Activated CD8-positive, alpha-beta memory T cell treated with anti-CD3 and anti-CD28 coated beads, Interleukin-2, amount 10 ng/mL, durations not matched to agents 7 days and 5 days (primary cell): ENCODE measurements at regions of chr11 and their contacts with region 1.

Region 1: GRCh38 chr11:123407130-123407995 is 22.7 kb upstream of the GRAMD1B start:
- DNase-seq: peak; percentile 79
- ATAC-seq: peak; percentile 90
- H3K4me3 Mint-ChIP-seq: peak overlapping the region; percentile 74
- H3K27ac Mint-ChIP-seq: peak overlapping the region; percentile 75
- H3K4me1 Mint-ChIP-seq: peaks cover 48% of the 10 kb centered on the region
- H3K27me3 Mint-ChIP-seq: no peaks in the 10 kb centered on the region

Region 2: DNA sequence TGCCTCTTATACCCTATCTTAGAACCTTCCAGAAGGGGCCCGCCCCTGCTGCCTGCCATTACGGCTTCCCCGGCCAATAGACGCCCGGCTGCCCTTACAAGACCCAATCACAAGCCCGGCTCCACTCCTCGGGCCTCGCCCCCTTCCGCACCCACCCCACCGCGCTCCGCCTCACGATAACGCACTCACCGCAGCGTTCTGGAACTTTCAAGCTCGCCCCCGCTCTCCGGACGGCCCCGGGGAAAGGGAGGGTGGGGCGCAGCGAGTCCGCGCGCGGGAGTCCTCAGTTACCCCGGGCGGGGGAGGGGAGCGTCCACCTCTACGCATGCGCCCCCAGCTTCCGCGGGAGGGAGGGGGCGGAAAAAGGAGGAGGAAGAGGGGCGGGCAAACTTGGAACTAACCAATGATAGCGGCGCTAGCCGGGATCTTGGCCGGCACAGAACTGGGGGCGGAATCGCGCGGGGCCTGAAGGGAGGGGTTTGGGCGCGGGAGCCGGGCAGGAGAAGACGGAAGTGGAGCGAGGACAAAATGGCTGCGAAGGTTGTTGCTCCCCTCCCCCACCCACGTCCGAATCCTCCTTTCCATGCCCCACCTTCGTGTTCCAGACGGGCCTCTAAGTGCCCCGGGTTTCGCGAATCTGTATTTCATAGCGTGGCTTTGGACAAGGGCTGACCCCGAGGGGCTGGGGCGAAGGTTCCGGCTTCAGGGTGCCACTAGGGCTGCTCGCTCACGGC is 345.0 kb before region 1 on chr11:
- CTCF ChIA-PET with region 1: no interaction called
- DNase-seq: peak; percentile 99
- ATAC-seq: peak; percentile 84
- H3K4me3 Mint-ChIP-seq: peak overlapping the region; percentile 99
- H3K27ac Mint-ChIP-seq: peak overlapping the region; percentile 100
- H3K4me1 Mint-ChIP-seq: peaks cover 46% of the 10 kb centered on the region
- H3K27me3 Mint-ChIP-seq: no peaks in the 10 kb centered on the region

Region 3: DNA sequence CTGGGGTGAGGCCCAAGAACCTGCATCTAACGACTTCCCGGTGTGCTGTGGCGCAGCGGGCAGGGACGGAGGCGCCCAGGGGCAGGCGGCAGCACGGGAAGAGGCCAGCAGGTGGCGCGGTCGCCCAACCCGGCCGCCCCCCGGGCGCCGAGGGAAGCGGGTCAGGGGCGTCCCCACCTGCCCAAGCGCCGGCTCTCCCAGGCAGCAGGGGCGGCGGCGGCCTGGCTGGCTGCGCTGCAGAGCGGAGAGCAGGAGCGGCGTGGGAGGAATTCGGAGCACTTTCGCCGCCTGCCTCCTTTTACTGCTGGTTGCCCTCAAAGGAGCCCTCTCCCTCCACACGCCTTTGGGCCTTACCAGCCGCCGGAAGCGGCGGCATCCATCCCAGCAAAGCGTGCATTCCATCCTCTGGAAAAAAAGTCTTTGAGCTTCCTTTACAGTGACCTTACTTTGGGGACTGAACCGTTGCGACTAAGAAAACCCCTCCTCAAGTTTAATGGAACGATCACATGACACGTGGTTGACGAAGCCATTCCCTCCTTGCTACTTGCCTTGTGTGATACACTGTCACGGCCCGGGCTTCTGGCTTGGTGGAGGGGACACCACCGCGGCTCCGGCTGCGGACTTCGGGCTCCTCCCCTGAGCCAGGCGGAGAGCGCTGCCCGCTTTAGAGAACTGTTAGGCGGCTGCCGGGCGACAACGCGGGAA is 105.5 kb before region 1 on chr11:
- CTCF ChIA-PET with region 1: interaction called, 37 read pairs
- DNase-seq: peak; percentile 78
- ATAC-seq: peak; percentile 91
- H3K4me3 Mint-ChIP-seq: peak overlapping the region; percentile 49
- H3K27ac Mint-ChIP-seq: peak overlapping the region; percentile 61
- H3K4me1 Mint-ChIP-seq: peaks cover 54% of the 10 kb centered on the region
- H3K27me3 Mint-ChIP-seq: no peaks in the 10 kb centered on the region

Region 4: GRCh38 chr11:123381817-123382554 is 25.4 kb before region 1 on chr11:
- CTCF ChIA-PET with region 1: interaction called, 18 read pairs
- DNase-seq: peak; percentile 90
- ATAC-seq: peak; percentile 95
- H3K4me3 Mint-ChIP-seq: peak overlapping the region; percentile 7
- H3K27ac Mint-ChIP-seq: no peak overlapping the region
- H3K4me1 Mint-ChIP-seq: peaks cover 44% of the 10 kb centered on the region
- H3K27me3 Mint-ChIP-seq: no peaks in the 10 kb centered on the region

Region 5: DNA sequence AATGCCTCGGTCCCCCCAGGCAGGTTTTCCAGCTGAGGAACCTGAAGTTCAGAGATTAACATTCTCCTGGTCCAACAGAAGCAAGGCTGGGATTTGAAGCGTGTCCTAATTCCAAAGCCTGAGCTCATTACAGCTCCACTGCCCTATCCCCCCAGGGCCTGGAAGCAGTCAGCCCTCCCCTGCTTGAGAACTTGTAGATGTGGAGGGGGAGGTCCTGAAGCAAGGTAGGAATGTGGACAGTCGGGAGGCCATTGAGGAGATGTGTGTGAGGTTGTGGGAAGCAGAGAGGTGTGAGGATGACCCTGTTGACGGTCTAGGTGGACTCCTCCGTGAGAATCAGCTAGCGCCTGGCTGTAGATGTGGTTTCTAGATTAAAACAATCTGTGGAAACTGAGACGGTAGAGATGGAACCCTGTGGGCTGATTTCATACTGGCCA is 30.8 kb after region 1 on chr11:
- CTCF ChIA-PET with region 1: interaction called, 101 read pairs
- DNase-seq: peak; percentile 43
- ATAC-seq: peak; percentile 20
- H3K4me3 Mint-ChIP-seq: peak overlapping the region; percentile 23
- H3K27ac Mint-ChIP-seq: peak overlapping the region; percentile 83
- H3K4me1 Mint-ChIP-seq: peaks cover 97% of the 10 kb centered on the region
- H3K27me3 Mint-ChIP-seq: no peaks in the 10 kb centered on the region

Region 6: DNA sequence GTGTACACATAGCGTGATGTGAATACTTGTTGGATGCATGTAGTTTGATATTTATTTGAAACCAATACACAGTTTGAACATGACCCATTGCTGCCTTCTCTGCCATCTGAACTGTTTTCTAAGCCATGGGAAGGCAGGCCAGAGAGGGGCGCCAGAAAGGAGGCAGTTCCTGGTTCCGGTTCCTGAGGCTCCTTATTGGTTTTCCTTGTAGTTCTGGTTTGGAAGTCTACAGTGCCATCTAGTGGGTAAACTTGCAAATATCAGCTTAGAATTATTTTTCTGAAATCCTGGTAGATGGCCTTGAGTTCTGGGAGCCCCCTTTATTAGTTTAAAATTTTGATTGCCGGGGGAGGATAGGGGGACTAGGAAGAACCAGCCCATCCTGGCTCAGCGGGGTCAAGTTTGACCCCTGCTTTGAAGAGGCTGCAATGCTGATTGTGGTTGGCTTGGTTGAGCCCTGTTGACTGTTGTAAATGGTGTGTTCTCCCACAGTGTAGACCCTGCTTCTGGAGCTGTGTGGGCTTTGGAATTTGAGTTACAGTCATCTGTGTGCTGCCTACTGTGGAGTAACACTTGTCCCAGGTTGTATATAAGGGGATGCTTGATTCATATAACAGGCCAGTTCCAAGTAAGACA is 71.1 kb after region 1 on chr11:
- CTCF ChIA-PET with region 1: interaction called, 248 read pairs
- DNase-seq: peak; percentile 47
- ATAC-seq: peak; percentile 45
- H3K4me3 Mint-ChIP-seq: peak overlapping the region; percentile 57
- H3K27ac Mint-ChIP-seq: peak overlapping the region; percentile 78
- H3K4me1 Mint-ChIP-seq: peaks cover 71% of the 10 kb centered on the region
- H3K27me3 Mint-ChIP-seq: no peaks in the 10 kb centered on the region

Region 7: DNA sequence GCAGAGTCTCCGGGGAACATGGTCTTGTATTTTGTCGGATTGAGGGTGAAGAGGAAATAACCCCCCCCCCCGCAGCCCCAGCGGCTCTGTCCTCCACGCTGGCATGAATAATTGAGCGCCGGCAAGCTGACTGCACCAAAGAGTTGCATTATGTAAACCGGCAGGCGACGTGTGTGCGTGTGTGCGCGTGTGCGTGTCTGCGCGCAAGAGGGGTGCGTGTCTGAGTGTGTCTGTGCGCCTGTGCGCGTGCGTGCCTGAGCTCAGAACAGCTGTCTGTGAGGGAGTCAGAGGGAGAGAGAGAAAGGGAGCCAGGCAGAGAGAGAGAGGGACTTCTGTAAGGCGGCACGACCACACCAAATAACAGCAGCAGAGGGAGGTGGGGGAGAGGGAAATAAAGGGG is 152.6 kb after region 1 on chr11:
- CTCF ChIA-PET with region 1: interaction called, 15 read pairs
- DNase-seq: no peak
- ATAC-seq: no peak
- H3K4me3 Mint-ChIP-seq: no peak overlapping the region
- H3K27ac Mint-ChIP-seq: no peak overlapping the region
- H3K4me1 Mint-ChIP-seq: peaks cover 9% of the 10 kb centered on the region
- H3K27me3 Mint-ChIP-seq: no peaks in the 10 kb centered on the region